Activated CD8-positive, alpha-beta T cell treated with anti-CD3 and anti-CD28 coated beads for 36 hours (primary cell): ENCODE measurements at regions of chr2 and their contacts with region 1.

Region 1: DNA sequence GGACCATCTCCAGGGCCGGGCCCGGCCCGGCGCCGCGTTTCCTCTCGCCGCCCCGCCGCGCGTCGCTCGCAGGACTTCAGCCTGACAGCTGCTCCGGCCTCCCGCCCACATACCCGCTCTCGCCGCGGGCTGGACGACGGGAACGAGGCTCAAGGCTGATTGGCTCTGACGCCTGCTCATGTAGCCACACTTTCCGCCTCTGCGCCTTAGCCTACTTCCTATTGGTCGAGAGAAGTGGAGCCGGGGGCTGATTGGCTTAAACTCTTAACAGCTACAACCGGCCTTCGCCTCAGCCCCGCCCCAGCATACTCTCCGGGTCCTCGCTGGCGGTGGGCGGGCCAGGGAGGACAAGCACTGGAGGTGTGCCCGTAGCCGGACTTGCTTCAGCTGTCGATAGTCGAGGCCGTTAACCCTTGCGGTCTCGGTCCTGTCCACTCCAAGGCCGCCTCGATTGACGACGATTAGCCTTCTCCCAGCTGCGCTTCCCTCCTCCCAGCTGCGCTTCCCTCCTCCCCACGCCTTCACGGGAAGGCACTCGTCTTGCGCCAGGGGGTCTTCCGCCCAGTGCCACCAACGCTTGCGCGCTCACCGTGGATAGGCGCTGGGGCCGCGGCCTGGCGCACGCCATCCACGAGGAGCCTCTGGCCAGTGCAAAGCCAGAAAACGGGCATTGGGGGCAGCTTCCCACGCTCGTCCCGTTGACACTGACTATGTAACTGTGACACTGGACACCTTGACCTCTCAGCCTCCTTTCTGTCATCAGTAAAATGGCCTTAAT is at the start of gene PRADC1:
- DNase-seq: peak; percentile 98
- ATAC-seq: peak; percentile 90
- H3K4me3 Mint-ChIP-seq: peak within 1 kb of the TSS; percentile 99
- H3K27ac Mint-ChIP-seq: peak within 1 kb of the TSS; percentile 95
- H3K4me1 Mint-ChIP-seq: peaks cover 29% of the 10 kb centered on the region
- H3K27me3 Mint-ChIP-seq: no peaks in the 10 kb centered on the region
- CTCF ChIP-seq: no peak
- total RNA-seq, gene PRADC1: 12.4 to 16.2 TPM

Region 2: DNA sequence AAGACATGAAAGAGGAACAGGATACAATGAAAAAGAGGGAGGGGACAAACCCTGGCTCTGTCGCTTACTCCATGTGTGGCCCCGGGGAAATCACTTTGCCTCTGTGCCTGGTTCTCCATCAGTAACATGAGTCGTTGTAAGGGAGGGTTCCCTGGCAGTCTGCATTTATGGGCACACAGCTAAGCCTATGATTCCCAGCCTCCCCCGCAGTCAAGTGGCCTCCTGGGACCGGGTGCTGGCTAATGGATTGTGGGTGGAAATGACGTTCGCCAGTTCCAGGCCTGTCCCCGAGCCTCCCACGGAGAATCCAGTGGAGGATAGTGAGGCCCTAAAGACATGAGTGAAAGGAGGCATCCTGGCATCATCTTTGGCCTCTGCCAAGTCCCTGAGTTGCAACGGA is 204.5 kb before region 1 on chr2:
- CTCF ChIA-PET with region 1: no interaction called
- POLR2A ChIA-PET with region 1: no interaction called
- intact Hi-C with region 1: no loop called
- DNase-seq: no peak
- ATAC-seq: no peak
- H3K4me3 Mint-ChIP-seq: no peak overlapping the region
- H3K27ac Mint-ChIP-seq: no peak overlapping the region
- H3K4me1 Mint-ChIP-seq: no peaks in the 10 kb centered on the region
- H3K27me3 Mint-ChIP-seq: no peaks in the 10 kb centered on the region
- CTCF ChIP-seq: no peak

Region 3: GRCh38 chr2:73122536-73122935 is 110.8 kb before region 1 on chr2:
- CTCF ChIA-PET with region 1: no interaction called
- POLR2A ChIA-PET with region 1: no interaction called
- intact Hi-C with region 1: no loop called
- DNase-seq: no peak
- ATAC-seq: no peak
- H3K4me3 Mint-ChIP-seq: no peak overlapping the region
- H3K27ac Mint-ChIP-seq: no peak overlapping the region
- H3K4me1 Mint-ChIP-seq: no peaks in the 10 kb centered on the region
- H3K27me3 Mint-ChIP-seq: peaks cover 14% of the 10 kb centered on the region
- CTCF ChIP-seq: no peak

Region 4: GRCh38 chr2:73218298-73218697 is 15.0 kb before region 1 on chr2:
- CTCF ChIA-PET with region 1: interaction called, 53 read pairs
- POLR2A ChIA-PET with region 1: interaction called, 108 read pairs
- intact Hi-C with region 1: no loop called
- DNase-seq: no peak
- ATAC-seq: no peak
- H3K4me3 Mint-ChIP-seq: no peak overlapping the region
- H3K27ac Mint-ChIP-seq: peak overlapping the region; percentile 11
- H3K4me1 Mint-ChIP-seq: peaks cover 25% of the 10 kb centered on the region
- H3K27me3 Mint-ChIP-seq: no peaks in the 10 kb centered on the region
- CTCF ChIP-seq: no peak

Region 5: DNA sequence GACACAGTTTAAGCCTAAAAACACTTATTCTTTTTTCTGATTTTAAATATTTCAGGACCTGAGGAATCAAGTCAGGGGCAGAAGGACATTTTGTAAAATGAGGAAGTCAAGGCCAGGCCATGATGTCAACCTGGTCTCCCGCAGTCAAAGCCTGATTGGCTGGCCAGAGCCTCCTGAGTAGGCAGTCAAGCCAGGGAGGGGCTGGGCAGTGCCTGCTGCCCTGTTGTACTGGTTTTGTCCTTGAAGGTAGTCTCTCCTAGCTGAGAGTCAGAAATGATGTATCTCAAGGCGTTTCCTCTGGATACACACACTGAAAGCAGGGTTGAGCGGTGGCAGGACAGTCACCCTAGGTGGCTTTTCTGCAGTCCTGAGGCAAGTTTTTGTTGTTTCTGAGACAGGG is 20.6 kb after region 1 on chr2:
- CTCF ChIA-PET with region 1: interaction called, 3 read pairs
- POLR2A ChIA-PET with region 1: interaction called, 97 read pairs
- intact Hi-C with region 1: no loop called
- DNase-seq: no peak
- ATAC-seq: no peak
- H3K4me3 Mint-ChIP-seq: no peak overlapping the region
- H3K27ac Mint-ChIP-seq: peak overlapping the region; percentile 49
- H3K4me1 Mint-ChIP-seq: peaks cover 3% of the 10 kb centered on the region
- H3K27me3 Mint-ChIP-seq: no peaks in the 10 kb centered on the region
- CTCF ChIP-seq: no peak

Region 6: DNA sequence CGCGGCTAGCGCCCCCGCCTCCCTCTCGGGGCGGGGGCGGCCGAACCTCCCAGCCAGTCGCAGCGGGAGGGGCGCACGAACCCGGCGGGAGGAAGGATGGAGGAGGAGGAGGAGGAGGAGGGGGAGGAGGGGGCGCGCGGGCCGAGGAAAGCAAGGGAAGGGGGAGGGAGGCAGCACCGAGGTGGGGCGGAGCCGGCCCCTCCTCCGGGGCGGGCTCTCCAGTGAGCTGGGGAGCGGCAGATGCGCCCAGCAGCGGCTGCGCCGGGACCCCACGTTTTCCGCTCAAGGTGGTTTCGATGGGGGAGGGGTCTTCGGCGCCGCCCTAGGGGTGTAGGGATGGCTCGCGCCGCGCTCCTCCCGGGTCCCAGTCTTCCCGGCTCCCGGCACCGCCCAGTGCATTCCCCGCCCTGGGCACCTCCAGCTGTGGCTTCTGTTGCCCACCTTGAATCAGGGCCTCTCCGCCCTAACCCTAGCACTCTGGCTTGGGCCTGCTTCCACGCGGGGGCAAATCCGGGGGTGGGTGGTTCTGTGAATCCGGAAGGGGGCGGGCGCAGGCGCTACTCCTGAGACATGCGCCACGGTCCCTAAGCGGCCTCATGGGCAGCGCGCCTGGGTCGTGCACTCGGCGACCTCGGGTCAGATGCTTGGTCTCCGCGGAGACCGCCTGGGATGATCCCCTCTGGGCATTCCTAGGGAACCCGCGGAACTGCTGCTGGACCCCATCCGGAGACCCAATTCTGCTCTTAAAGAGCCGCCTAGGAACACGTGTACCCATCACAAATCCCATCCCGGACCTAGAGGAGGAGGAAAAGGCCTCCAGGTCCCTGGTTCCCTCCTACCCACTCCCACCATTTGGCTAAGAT is 51.2 kb after region 1 on chr2 and contains the start of gene FBXO41:
- CTCF ChIA-PET with region 1: interaction called, 28 read pairs
- POLR2A ChIA-PET with region 1: interaction called, 11 read pairs
- intact Hi-C with region 1: no loop called
- DNase-seq: peak; percentile 89
- ATAC-seq: peak; percentile 82
- H3K4me3 Mint-ChIP-seq: peak within 1 kb of the TSS; percentile 90
- H3K27ac Mint-ChIP-seq: peak within 1 kb of the TSS; percentile 86
- H3K4me1 Mint-ChIP-seq: peaks cover 23% of the 10 kb centered on the region
- H3K27me3 Mint-ChIP-seq: peaks cover 2% of the 10 kb centered on the region
- CTCF ChIP-seq: no peak
- total RNA-seq, gene FBXO41: 41.5 to 42.0 TPM